Activated T-helper 2 cell treated with anti-CD3 and anti-CD28 coated beads, Interferon-gamma antibody, Interleukin-2, Interleukin-4, amounts not matched to agents 10 μg/mL and 5 μg/mL and 100 μg/mL, durations not matched to agents 14 hours and 24 hours and 36 hours (primary cell): ENCODE measurements at regions of chr19 and their contacts with region 1.

Region 1: GRCh38 chr19:10756371-10756770 is 38.5 kb downstream of the DNM2 start:
- DNase-seq: no peak
- H3K4me3 Mint-ChIP-seq: peak overlapping the region; percentile 26
- H3K27ac Mint-ChIP-seq: peak overlapping the region; percentile 56
- H3K4me1 Mint-ChIP-seq: peaks cover 58% of the 10 kb centered on the region
- H3K27me3 Mint-ChIP-seq: no peaks in the 10 kb centered on the region

Region 2: DNA sequence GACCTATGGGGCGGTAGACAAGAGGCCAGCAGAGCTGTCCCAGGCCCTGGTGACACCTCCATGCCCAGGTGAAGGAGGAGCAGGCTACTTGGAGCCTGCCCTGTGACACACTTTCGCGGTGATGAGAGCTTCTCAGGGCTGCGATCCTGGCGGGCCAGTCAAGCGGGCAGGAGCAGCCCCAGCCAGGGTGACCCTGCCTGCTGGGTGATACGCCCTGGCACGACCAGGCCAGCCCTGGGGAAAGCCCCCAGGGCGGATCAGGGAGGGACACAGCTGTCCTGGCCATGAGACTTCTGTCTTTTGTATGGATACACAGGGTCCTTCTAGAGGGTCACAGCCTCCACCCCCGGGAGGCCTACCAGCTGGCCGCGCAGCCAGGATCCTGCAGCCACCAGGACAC is 25.4 kb before region 1 on chr19:
- intact Hi-C with region 1: loop called (anchors 2 kb)
- DNase-seq: no peak
- H3K4me3 Mint-ChIP-seq: no peak overlapping the region
- H3K27ac Mint-ChIP-seq: peak overlapping the region; percentile 78
- H3K4me1 Mint-ChIP-seq: peaks cover 37% of the 10 kb centered on the region
- H3K27me3 Mint-ChIP-seq: no peaks in the 10 kb centered on the region

Region 3: GRCh38 chr19:10835754-10836477 is 79.5 kb after region 1 on chr19 and contains the start of gene TMED1:
- intact Hi-C with region 1: loop called (anchors 1 kb)
- DNase-seq: peak; percentile 95
- H3K4me3 Mint-ChIP-seq: peak within 1 kb of the TSS; percentile 92
- H3K27ac Mint-ChIP-seq: peak within 1 kb of the TSS; percentile 99
- H3K4me1 Mint-ChIP-seq: peaks cover 10% of the 10 kb centered on the region
- H3K27me3 Mint-ChIP-seq: no peaks in the 10 kb centered on the region
- total RNA-seq, gene TMED1: 16.7 and 17.9 TPM in 2 replicates

Region 4: GRCh38 chr19:10960314-10961072 is 204.1 kb after region 1 on chr19 and contains the start of gene SMARCA4:
- intact Hi-C with region 1: no loop called
- DNase-seq: peak; percentile 97
- H3K4me3 Mint-ChIP-seq: peak within 1 kb of the TSS; percentile 91
- H3K27ac Mint-ChIP-seq: peak within 1 kb of the TSS; percentile 86
- H3K4me1 Mint-ChIP-seq: peaks cover 28% of the 10 kb centered on the region
- H3K27me3 Mint-ChIP-seq: no peaks in the 10 kb centered on the region
- total RNA-seq, gene SMARCA4: 149 and 158 TPM in 2 replicates